ENCODE measurements at regions of chr1 and their contacts with region 1.

Region 1: GRCh38 chr1:1615256-1616044 is at the start of gene MIB2:
- DNase-seq: peak; percentile 98 to 100 (median 99)
- ATAC-seq: peak; percentile 94
- H3K4me3 ChIP-seq: peak within 1 kb of the TSS; percentile 74
- H3K4me3 Mint-ChIP-seq: peak within 1 kb of the TSS; percentile 93 to 99 (median 96)
- H3K27ac ChIP-seq: peak within 1 kb of the TSS; percentile 100
- H3K27ac Mint-ChIP-seq: peak within 1 kb of the TSS; percentile 94 to 100 (median 99)
- H3K4me1 ChIP-seq: peaks cover 15 to 21% of the 10 kb centered on the region in 2 donors
- H3K4me1 Mint-ChIP-seq: peaks cover 18 to 36% (median 32%) of the 10 kb centered on the region in 7 donors
- H3K27me3 ChIP-seq: no peaks in the 10 kb centered on the region
- H3K27me3 Mint-ChIP-seq: no peaks in the 10 kb centered on the region
- total RNA-seq, gene MIB2: 45.6 to 129 (median 65.7) TPM

Region 2: DNA sequence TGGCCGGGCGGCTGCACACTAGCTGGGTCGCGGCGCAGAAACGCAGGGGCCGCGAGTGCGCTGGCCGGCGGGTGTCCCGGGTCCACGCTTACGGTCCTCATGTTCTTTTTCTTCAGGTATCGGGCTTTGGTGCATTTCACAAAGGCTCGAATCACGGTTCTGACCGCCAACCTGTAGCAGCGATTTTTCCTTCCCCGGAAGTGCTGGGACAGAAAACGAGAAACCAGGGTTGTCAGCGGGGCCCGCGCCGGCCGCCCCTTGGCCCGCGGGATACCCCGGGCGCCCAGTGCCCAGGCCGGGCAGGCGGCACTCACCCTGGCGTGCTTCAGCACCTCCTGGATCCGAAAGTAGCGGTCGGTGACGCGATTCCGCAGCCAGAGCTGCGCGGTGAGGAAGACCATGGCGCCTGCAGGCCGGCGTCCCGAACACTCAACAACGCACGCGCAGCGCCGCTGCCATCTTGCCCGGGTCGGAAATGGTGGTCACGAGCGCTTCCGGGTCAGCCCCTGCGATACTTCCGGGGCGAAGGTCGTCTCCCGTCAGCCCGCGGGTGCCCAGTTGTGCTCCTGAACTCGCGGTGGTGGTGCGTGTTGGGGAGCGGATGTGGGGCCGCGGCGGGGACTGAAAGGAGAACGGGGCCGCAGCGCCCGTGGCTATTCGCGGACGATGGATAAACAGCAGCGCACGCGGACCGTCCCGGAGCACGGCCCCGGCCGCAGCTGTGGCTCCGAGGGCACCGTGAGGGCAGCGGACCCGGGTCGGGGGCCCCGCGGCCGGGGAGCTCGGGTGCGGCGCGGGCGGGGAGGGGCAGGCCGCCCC is 208.4 kb before region 1 on chr1 and contains the start of gene MRPL20:
- CTCF ChIA-PET with region 1: no interaction called
- POLR2A ChIA-PET with region 1: interaction called, 15 read pairs
- intact Hi-C with region 1: loop called in 1 of 2 experiments (anchors 10 kb)
- DNase-seq: peak; percentile 88 to 96 (median 94)
- ATAC-seq: peak; percentile 97
- H3K4me3 ChIP-seq: peak within 1 kb of the TSS; percentile 89
- H3K4me3 Mint-ChIP-seq: peak within 1 kb of the TSS; percentile 83 to 96 (median 93)
- H3K27ac ChIP-seq: peak within 1 kb of the TSS; percentile 89
- H3K27ac Mint-ChIP-seq: peak within 1 kb of the TSS; percentile 90 to 97 (median 94)
- H3K4me1 ChIP-seq: peaks cover 19 to 20% of the 10 kb centered on the region in 2 donors
- H3K4me1 Mint-ChIP-seq: peaks cover 0 to 59% (median 35%) of the 10 kb centered on the region in 7 donors
- H3K27me3 ChIP-seq: no peaks in the 10 kb centered on the region
- H3K27me3 Mint-ChIP-seq: peaks cover 0 to 1% (median 0%) of the 10 kb centered on the region in 5 donors
- total RNA-seq, gene MRPL20: 91.2 to 135 (median 122) TPM

Region 3: DNA sequence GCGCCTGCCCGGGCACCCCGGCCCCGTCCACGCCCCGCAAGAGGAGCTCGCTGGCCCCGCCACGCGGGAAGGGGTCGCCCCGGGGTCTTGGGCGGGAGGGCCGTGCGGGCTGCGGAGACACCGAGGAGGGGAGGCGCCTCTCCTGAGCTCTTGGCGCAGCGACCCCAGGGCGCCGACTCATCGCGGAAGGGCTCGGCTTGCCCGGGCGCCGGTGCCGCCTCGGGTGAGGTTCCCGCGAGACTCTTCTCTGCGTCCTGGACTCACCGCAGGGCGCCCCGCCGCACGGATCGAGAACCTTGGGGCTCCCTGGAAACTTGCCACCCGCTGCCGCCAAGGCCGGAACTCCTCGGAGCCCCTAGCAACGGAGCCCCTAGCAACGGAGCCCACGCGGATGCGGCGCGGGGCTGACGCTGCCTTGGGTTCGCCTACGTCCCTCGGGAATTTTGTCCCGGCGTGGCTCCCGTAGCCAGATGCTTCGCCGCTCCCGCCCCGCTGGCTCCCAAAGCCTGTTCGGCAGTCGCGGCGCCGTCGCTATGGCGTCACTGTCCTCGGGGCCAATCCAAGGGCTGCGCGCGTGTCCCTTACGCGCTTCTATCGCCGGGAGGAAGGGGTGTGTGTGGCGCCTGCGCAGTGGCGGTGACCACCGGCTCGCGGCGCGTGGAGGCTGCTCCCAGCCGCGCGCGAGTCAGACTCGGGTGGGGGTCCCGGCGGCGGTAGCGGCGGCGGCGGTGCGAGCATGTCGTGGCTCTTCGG is 103.7 kb before region 1 on chr1 and contains the start of gene ATAD3A:
- CTCF ChIA-PET with region 1: no interaction called
- POLR2A ChIA-PET with region 1: interaction called, 3 read pairs
- intact Hi-C with region 1: loop called in 1 of 2 experiments (anchors 2 kb)
- DNase-seq: peak; percentile 84 to 96 (median 94)
- ATAC-seq: peak; percentile 96
- H3K4me3 ChIP-seq: peak within 1 kb of the TSS; percentile 98
- H3K4me3 Mint-ChIP-seq: peak within 1 kb of the TSS; percentile 82 to 94 (median 90)
- H3K27ac ChIP-seq: peak within 1 kb of the TSS; percentile 85
- H3K27ac Mint-ChIP-seq: peak within 1 kb of the TSS; percentile 81 to 96 (median 92)
- H3K4me1 ChIP-seq: peaks cover 4 to 5% of the 10 kb centered on the region in 2 donors
- H3K4me1 Mint-ChIP-seq: peaks cover 6 to 21% (median 14%) of the 10 kb centered on the region in 7 donors
- H3K27me3 ChIP-seq: no peaks in the 10 kb centered on the region
- H3K27me3 Mint-ChIP-seq: no peaks in the 10 kb centered on the region
- total RNA-seq, gene ATAD3A: 21.0 to 41.3 (median 22.9) TPM

Region 4: GRCh38 chr1:1574721-1575537 is 40.5 kb before region 1 on chr1 and contains the start of gene SSU72:
- CTCF ChIA-PET with region 1: interaction called, 5 read pairs
- POLR2A ChIA-PET with region 1: interaction called, 42 read pairs
- intact Hi-C with region 1: loop called (anchors 1 kb)
- DNase-seq: peak; percentile 90 to 97 (median 93)
- ATAC-seq: peak; percentile 94
- H3K4me3 ChIP-seq: peak within 1 kb of the TSS; percentile 93
- H3K4me3 Mint-ChIP-seq: peak within 1 kb of the TSS; percentile 97 to 99 (median 98)
- H3K27ac ChIP-seq: peak within 1 kb of the TSS; percentile 98
- H3K27ac Mint-ChIP-seq: peak within 1 kb of the TSS; percentile 98 to 100 (median 99)
- H3K4me1 ChIP-seq: peaks cover 22 to 26% of the 10 kb centered on the region in 2 donors
- H3K4me1 Mint-ChIP-seq: peaks cover 21 to 42% (median 31%) of the 10 kb centered on the region in 7 donors
- H3K27me3 ChIP-seq: no peaks in the 10 kb centered on the region
- H3K27me3 Mint-ChIP-seq: peaks cover 0 to 2% (median 0%) of the 10 kb centered on the region in 5 donors
- total RNA-seq, gene SSU72: 121 to 148 (median 137) TPM

Region 5: GRCh38 chr1:1630271-1630964 is 15.0 kb after region 1 on chr1:
- CTCF ChIA-PET with region 1: interaction called, 3 read pairs
- POLR2A ChIA-PET with region 1: interaction called, 86 read pairs
- intact Hi-C with region 1: loop called in 1 of 2 experiments (anchors 2 kb)
- DNase-seq: peak; percentile 90 to 97 (median 96)
- ATAC-seq: peak; percentile 76
- H3K4me3 ChIP-seq: peak overlapping the region; percentile 17
- H3K4me3 Mint-ChIP-seq: peak overlapping the region; percentile 85 to 95 (median 90)
- H3K27ac ChIP-seq: peak overlapping the region; percentile 68
- H3K27ac Mint-ChIP-seq: peak overlapping the region; percentile 83 to 98 (median 95)
- H3K4me1 ChIP-seq: peaks cover 0 to 4% of the 10 kb centered on the region in 2 donors
- H3K4me1 Mint-ChIP-seq: peaks cover 0 to 11% (median 4%) of the 10 kb centered on the region in 7 donors
- H3K27me3 ChIP-seq: no peaks in the 10 kb centered on the region
- H3K27me3 Mint-ChIP-seq: peaks cover 0 to 5% (median 0%) of the 10 kb centered on the region in 5 donors